ENCODE measurements at regions of chr1 and their contacts with region 1.

Region 1: GRCh38 chr1:236590553-236591150 is 13.7 kb downstream of the HEATR1 start:
- DNase-seq: no peak
- ATAC-seq: no peak
- H3K4me3 ChIP-seq: no peak overlapping the region
- H3K27ac ChIP-seq: no peak overlapping the region
- H3K4me1 ChIP-seq: no peaks in the 10 kb centered on the region
- H3K27me3 ChIP-seq: no peaks in the 10 kb centered on the region
- CTCF ChIP-seq: no peak
- POLR2A ChIP-seq: no peak
- RAD21 ChIP-seq: no peak

Region 2: GRCh38 chr1:236545621-236546169 is 45.0 kb before region 1 on chr1:
- CTCF ChIA-PET with region 1: no interaction called
- POLR2A ChIA-PET with region 1: no interaction called
- dilution Hi-C with region 1: no loop called
- in situ Hi-C with region 1: loop called (anchors 5 kb)
- intact Hi-C with region 1: loop called (anchors 5 kb)
- DNase-seq: no peak
- ATAC-seq: no peak
- H3K4me3 ChIP-seq: no peak overlapping the region
- H3K27ac ChIP-seq: no peak overlapping the region
- H3K4me1 ChIP-seq: no peaks in the 10 kb centered on the region
- H3K27me3 ChIP-seq: no peaks in the 10 kb centered on the region
- CTCF ChIP-seq: no peak
- POLR2A ChIP-seq: no peak
- RAD21 ChIP-seq: no peak

Region 3: DNA sequence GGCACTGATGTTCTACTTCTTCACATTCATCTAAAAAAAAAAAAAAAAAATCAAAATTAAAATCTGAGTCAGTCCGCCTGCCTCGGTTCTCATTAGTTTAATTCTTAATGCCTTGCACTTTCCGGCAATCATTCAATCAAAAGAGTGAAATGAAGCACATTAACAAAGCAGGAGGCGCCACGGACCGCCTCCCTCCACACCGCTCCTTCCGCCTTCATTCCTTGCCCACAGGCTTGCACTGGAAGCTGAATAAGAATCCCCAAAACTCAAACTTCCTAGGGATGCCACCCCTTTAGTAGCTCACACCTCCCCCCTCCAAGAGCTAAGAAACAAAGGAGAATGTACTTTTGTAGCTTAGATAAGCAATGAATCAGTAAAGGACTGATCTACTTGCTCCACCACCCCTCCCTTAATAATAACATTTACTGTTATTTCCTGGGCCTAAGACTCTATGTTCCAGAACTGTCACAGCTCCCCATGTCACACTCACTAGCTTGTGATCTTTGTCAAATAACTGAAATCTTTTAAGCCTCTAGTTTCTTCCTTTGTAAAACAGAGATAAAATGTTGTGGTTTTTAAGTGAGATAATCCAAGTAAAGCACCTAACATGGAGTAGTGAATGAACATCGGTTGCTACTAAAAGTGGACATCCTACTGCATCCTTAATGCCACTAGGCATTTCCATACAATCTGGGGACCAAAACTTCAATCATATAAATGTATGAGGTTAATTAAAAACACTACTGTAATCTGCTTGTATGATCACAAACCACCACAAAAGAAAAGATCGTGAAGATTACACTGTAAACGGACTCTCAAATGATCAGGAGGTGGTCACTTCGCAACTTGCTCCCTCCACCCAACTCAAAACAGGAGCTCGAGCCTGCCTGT is 39.4 kb before region 1 on chr1:
- CTCF ChIA-PET with region 1: no interaction called
- POLR2A ChIA-PET with region 1: no interaction called
- dilution Hi-C with region 1: no loop called
- in situ Hi-C with region 1: loop called (anchors 5 kb)
- intact Hi-C with region 1: loop called (anchors 5 kb)
- DNase-seq: no peak
- ATAC-seq: no peak
- H3K4me3 ChIP-seq: no peak overlapping the region
- H3K27ac ChIP-seq: no peak overlapping the region
- H3K4me1 ChIP-seq: peaks cover 2% of the 10 kb centered on the region
- H3K27me3 ChIP-seq: no peaks in the 10 kb centered on the region
- CTCF ChIP-seq: no peak
- POLR2A ChIP-seq: no peak
- RAD21 ChIP-seq: no peak

Region 4: GRCh38 chr1:236575523-236575922 is 15.1 kb before region 1 on chr1:
- CTCF ChIA-PET with region 1: no interaction called
- POLR2A ChIA-PET with region 1: no interaction called
- dilution Hi-C with region 1: no loop called
- in situ Hi-C with region 1: no loop called
- intact Hi-C with region 1: loop called (anchors 2 kb)
- DNase-seq: peak; percentile 47
- ATAC-seq: peak; percentile 53
- H3K4me3 ChIP-seq: no peak overlapping the region
- H3K27ac ChIP-seq: no peak overlapping the region
- H3K4me1 ChIP-seq: no peaks in the 10 kb centered on the region
- H3K27me3 ChIP-seq: no peaks in the 10 kb centered on the region
- CTCF ChIP-seq: no peak
- POLR2A ChIP-seq: no peak
- RAD21 ChIP-seq: no peak

Region 5: DNA sequence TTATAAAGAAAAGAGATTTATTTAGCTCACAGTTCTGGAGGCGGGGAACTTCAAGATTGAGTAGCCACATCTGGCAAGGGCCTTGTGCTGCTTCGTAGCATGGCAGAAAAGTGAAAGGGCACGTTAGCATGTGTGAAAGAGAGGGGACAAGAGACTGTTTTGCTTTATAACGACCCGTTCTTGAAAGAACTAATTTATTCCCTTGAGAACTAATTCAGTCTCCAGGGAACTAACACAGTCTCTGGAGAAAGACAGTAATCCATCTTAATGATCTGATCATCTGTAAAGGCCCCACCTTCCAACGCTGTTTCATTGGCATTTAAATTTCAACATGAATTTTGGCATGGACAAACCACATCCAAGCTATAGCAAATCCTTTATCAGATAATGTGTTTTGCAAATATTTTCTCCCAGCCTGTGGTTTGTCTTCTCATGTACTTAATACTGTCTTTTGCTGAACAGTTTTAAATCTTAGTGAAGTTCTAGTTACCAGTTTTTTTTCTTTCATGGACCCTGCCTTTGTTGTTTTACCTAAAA is 230.5 kb after region 1 on chr1:
- CTCF ChIA-PET with region 1: no interaction called
- POLR2A ChIA-PET with region 1: no interaction called
- dilution Hi-C with region 1: no loop called
- in situ Hi-C with region 1: no loop called
- intact Hi-C with region 1: loop called (anchors 10 kb)
- DNase-seq: no peak
- ATAC-seq: no peak
- H3K4me3 ChIP-seq: no peak overlapping the region
- H3K27ac ChIP-seq: no peak overlapping the region
- H3K4me1 ChIP-seq: no peaks in the 10 kb centered on the region
- H3K27me3 ChIP-seq: no peaks in the 10 kb centered on the region
- CTCF ChIP-seq: no peak
- POLR2A ChIP-seq: no peak
- RAD21 ChIP-seq: no peak